HEK293 (cell line): ENCODE measurements at regions of chr5 and their contacts with region 1.

Region 1: DNA sequence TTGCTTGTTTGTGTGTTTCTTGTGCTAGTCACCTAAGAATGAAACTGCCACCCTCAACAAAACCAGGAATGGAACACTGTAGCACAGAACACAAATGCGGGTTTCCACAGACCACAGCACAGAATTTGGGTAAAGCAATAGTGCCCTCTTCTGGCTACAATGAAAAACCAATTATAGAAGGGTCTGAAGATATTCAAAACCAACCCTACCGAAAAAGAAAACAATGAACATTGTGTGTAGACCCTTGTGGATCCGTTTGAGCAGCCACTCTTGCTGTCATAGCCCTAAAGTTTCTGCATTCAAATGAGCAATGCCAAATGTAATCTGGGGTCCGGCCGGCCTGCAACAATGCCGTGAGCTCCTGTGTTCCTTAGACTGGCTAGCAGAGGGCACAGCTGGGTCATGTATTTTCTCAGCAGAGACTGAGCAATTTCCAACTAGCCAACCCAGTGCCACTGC is 8.3 kb upstream of the ENC1 start:
- H3K4me3 ChIP-seq: no peak overlapping the region
- H3K27ac ChIP-seq: no peak overlapping the region
- H3K4me1 ChIP-seq: peaks cover 13% of the 10 kb centered on the region
- CTCF ChIP-seq: peak; percentile 88

Region 2: GRCh38 chr5:73902327-73903051 is 746.4 kb before region 1 on chr5:
- CTCF ChIA-PET with region 1: interaction called, 30 read pairs
- POLR2A ChIA-PET with region 1: no interaction called
- H3K4me3 ChIP-seq: no peak overlapping the region
- H3K27ac ChIP-seq: no peak overlapping the region
- H3K4me1 ChIP-seq: no peaks in the 10 kb centered on the region
- CTCF ChIP-seq: peak; percentile 69